H1 (cell line): ENCODE measurements at regions of chr16 and their contacts with region 1.

Region 1: DNA sequence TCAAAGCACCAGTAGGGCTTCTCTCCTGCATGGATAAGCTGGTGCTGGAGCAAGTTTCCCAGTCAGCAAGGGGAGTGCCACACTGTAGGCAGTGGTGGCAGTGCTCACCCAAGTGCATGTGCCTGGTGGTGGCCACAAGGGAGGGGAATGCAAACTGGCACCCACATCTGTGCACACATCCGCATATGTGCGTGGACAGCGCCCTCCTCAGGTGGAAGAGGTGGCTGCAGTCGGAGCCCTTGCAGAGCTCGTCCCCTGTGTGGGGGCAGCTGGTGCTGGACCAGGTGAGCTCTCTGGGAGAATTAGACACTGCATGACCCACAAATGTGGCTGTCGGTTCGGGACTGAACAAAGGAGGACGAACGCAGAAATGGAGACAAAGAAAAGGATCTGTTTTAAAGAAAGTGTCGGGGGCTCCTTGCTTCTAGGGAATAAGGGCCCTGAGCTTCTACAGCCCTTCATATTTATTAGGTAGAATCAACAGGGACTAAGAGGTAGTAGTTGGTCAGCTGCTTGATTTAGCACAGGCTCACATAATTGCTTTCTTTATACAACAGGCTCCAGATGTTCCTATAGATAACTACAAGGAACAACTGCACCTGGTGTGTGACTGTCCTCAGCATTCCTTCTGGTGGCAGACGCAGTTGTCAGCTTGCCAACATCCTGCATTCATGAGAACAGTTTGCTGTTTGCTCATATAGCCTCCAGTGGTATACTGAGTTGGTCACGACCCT is 5.3 kb upstream of the ZNF689 start:
- DNase-seq: peak; percentile 82 to 100
- H3K4me3 ChIP-seq: no peak overlapping the region
- H3K27ac ChIP-seq: no peak overlapping the region
- H3K4me1 ChIP-seq: peaks cover 0 to 3% (median under 1%) of the 10 kb centered on the region in 4 experiments; a peak in 1 of 7 replicates
- H3K27me3 ChIP-seq: no peaks in the 10 kb centered on the region; a peak in 2 of 7 replicates
- CTCF ChIP-seq: peak; percentile 99 to 100 (median 100)
- EP300 ChIP-seq: no peak
- POLR2A ChIP-seq: no peak
- RAD21 ChIP-seq: peak; percentile 99

Region 2: DNA sequence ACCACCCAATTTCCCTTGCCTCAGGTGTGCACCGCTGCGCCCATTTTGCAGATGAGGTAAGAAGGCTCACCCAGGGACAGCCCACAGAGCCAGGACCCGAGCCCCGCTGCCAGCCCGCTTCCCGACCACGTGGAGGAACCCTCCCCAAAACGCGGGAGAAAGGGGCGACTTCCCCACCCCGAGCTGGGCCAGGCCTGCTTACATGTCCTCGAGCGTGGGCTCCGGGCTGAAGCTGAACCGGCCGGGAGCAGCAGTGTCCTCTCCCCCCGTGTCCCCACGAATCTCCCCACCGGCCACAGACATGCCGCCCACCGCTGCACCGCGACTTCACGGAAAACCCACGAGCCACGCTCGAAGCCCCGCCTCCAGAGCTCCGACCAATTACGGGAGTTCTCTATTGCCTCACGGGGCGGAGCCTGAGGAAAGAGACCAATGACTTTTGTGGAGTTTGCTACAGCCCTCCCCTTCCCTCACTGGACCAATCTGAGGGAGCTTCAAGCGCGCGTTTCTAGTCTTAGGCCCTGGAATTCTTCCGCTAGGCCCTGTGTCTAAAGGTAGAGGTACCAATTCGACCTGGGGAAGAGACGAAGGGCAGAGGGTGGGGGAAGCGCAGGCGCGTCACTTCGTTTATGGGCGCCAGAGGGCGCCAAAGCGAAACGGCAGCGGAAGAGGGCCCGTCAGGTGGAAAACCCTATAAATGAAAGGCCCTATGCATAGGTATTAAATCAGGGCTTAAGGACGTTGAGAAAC is 185.7 kb before region 1 on chr16 and contains the start of gene DCTPP1:
- CTCF ChIA-PET with region 1: interaction called, 17 read pairs
- POLR2A ChIA-PET with region 1: interaction called, 5 read pairs
- DNase-seq: peak; percentile 87 to 96
- H3K4me3 ChIP-seq: peak within 1 kb of the TSS; percentile 63 to 85 (median 80)
- H3K27ac ChIP-seq: peak within 1 kb of the TSS; percentile 34; the same call in 1 of the 2 replicates
- H3K4me1 ChIP-seq: peaks cover 0 to 6% (median 4%) of the 10 kb centered on the region in 4 experiments; a peak in 4 of 7 replicates
- H3K27me3 ChIP-seq: no peaks in the 10 kb centered on the region
- CTCF ChIP-seq: peak; percentile 73 to 82 (median 74)
- EP300 ChIP-seq: peak in 1 of 2 experiments; percentile 55; a peak in 1 of 3 replicates
- POLR2A ChIP-seq: peak in 1 of 2 experiments; percentile 47; a peak in 1 of 3 replicates
- RAD21 ChIP-seq: peak; percentile 46 to 54
- total RNA-seq, gene DCTPP1: 90.4 and 94.5 TPM in 2 replicates

Region 3: DNA sequence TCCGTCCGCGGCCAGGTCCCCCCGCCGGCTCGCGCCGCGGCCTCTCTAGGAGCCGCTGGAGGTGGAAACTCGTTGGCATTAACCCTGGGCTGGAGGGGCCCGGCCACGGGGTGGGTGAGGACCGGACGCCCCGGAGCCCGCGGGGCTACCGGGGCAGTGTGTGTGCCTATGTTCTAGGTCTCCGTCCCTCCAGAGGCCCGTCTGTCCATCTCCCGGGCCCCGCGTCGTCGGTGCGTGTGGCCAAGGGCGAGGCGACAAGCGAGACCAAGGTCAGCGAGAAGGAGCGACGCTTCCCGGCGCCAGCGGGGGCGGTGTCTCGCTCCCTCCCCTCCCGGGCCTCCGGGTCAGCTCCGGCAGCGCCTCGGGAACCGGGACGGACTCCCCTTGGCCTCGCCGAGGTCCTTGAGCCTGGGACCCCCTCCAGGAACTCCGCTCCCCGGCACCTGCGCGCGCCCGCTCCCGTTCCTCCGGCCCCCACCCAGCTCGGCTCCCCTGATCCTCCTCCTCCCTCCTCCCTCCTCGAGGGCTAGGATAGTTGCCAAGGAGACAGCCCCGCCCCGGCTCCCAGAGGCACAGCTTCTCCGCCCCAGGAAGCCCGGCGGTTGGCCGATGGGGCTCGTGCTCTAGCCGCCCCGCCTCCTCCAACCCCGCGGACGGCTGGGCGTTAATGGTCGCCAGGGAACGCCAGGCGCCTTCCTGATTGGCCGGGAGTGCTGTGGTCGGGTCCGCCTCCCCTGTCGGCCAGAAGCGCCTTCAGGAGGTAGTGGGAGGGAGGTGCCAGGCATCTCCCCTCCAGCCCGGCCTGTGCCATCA is 88.5 kb before region 1 on chr16:
- CTCF ChIA-PET with region 1: interaction called, 12 read pairs
- POLR2A ChIA-PET with region 1: interaction called, 6 read pairs
- DNase-seq: peak; percentile 91 to 97
- H3K4me3 ChIP-seq: peak overlapping the region; percentile 71 to 99 (median 94)
- H3K27ac ChIP-seq: peak overlapping the region; percentile 93
- H3K4me1 ChIP-seq: peaks cover 3 to 6% (median 6%) of the 10 kb centered on the region in 4 experiments; a peak in 6 of 7 replicates
- H3K27me3 ChIP-seq: no peaks in the 10 kb centered on the region
- CTCF ChIP-seq: peak in 2 of 3 experiments; percentile 19 to 25; a peak in 2 of 4 replicates
- EP300 ChIP-seq: no peak
- POLR2A ChIP-seq: peak in 1 of 2 experiments; percentile 81; a peak in 2 of 3 replicates
- RAD21 ChIP-seq: no peak; a peak in 1 of 4 replicates

Region 4: GRCh38 chr16:30557957-30558788 is 57.4 kb before region 1 on chr16 and contains the start of gene ZNF764:
- CTCF ChIA-PET with region 1: interaction called, 16 read pairs
- POLR2A ChIA-PET with region 1: interaction called, 17 read pairs
- DNase-seq: peak; percentile 86 to 88
- H3K4me3 ChIP-seq: peak within 1 kb of the TSS; percentile 58 to 86 (median 76)
- H3K27ac ChIP-seq: peak within 1 kb of the TSS; percentile 60; the same call in 1 of the 2 replicates
- H3K4me1 ChIP-seq: peaks cover 0 to 5% (median 2%) of the 10 kb centered on the region in 4 experiments; a peak in 2 of 7 replicates
- H3K27me3 ChIP-seq: peaks cover 0 to 3% (median 1%) of the 10 kb centered on the region in 4 experiments; a peak in 1 of 7 replicates
- CTCF ChIP-seq: no peak
- EP300 ChIP-seq: no peak
- POLR2A ChIP-seq: peak in 1 of 2 experiments; percentile 23; a peak in 1 of 3 replicates
- RAD21 ChIP-seq: no peak
- total RNA-seq, gene ZNF764: 7.7 and 8.4 TPM in 2 replicates

Region 5: GRCh38 chr16:30592871-30593270 is 22.7 kb before region 1 on chr16:
- CTCF ChIA-PET with region 1: interaction called, 27 read pairs
- POLR2A ChIA-PET with region 1: interaction called, 85 read pairs
- DNase-seq: no peak
- H3K4me3 ChIP-seq: no peak overlapping the region
- H3K27ac ChIP-seq: no peak overlapping the region
- H3K4me1 ChIP-seq: no peaks in the 10 kb centered on the region
- H3K27me3 ChIP-seq: no peaks in the 10 kb centered on the region
- CTCF ChIP-seq: no peak
- EP300 ChIP-seq: no peak
- POLR2A ChIP-seq: no peak
- RAD21 ChIP-seq: no peak

Region 6: DNA sequence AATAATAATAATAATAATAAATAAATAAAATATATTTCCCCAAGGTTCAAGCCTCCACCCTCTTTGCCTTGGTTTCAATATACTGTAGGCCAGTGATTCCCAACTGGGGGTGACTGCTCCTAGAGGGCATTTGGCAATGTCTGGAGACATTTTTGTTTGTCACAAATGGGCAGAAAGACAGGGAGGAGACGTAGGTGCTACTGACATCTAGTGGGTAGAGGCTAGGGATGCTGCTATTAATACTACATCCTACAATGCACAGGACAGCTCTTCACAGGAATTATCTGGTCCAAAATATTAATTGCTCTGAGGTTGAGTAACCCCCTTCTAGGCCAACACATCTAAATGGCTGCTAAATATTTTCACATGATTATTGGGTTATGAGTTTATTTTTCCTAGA is 22.4 kb after region 1 on chr16:
- CTCF ChIA-PET with region 1: interaction called, 10 read pairs
- POLR2A ChIA-PET with region 1: interaction called, 7 read pairs
- DNase-seq: no peak
- H3K4me3 ChIP-seq: no peak overlapping the region
- H3K27ac ChIP-seq: no peak overlapping the region
- H3K4me1 ChIP-seq: no peaks in the 10 kb centered on the region; a peak in 1 of 7 replicates
- H3K27me3 ChIP-seq: no peaks in the 10 kb centered on the region; a peak in 1 of 7 replicates
- CTCF ChIP-seq: peak in 2 of 3 experiments; percentile 58 to 73; a peak in 3 of 4 replicates
- EP300 ChIP-seq: no peak
- POLR2A ChIP-seq: no peak
- RAD21 ChIP-seq: peak; percentile 63 to 69